PC-3 (cell line): ENCODE measurements at regions of chr9 and their contacts with region 1.

Region 1: DNA sequence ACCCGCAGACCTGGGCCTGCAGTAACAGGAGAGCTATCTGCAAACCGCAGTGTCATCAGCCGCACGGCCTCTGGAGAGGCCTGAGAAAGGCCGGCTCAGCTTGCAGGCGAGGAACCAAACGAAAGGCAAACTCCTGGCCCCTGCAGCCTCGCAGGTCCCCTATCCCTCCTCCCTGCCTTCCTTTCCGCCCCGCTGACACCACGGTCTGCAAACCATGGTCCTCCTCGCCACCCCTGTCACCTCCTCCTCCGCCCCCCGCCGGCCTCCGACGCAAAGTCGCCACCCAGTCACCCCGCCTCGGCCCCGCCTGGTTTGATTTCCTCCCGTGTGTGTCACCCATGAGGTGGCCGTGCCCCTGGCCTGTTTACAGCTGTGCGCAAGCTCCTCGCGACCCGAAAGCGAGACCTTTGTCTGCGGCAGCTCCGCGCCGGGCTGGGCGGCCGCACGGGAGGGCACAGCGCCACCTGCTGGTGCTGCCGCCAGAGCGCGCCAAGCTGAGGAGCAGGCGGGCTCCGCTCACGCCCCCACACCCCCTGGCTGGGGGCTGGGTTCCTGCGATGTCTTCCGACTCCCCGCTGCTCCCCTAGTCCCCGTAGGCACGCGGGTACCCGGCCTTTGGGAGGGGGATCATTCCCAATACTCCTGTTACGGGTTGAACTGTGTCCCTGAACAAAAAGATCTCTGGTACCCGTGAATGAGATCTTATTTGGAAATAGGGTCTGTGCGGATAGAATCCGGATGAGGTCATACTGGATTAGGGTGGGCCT is 19.4 kb downstream of the GBGT1 start:
- DNase-seq: peak; percentile 85
- ATAC-seq: peak; percentile 65
- H3K4me3 ChIP-seq: peak overlapping the region; percentile 58
- H3K27ac ChIP-seq: peak overlapping the region; percentile 49
- H3K4me1 ChIP-seq: peaks cover 18% of the 10 kb centered on the region
- H3K27me3 ChIP-seq: no peaks in the 10 kb centered on the region
- CTCF ChIP-seq: peak; percentile 89

Region 2: DNA sequence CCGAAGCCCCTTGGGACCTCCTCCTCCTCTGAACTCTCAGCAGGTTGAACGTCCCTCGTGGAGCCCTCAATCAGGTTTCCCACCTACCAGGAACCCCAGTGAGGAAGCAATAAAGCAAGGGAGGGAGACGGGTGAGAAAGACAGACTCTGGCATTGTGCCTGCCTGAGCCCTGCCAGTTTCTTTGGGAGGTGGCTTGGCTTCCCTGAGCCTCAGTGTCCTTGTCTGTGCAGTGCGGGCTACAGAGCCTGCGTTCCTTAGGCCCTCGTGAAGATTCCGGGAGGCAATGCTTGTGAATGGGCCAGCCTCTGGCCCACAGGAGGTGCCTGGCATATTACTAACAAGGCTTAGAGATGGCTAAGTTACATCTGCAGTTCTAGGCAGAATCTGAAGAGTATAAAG is 101.6 kb before region 1 on chr9:
- CTCF ChIA-PET with region 1: no interaction called
- POLR2A ChIA-PET with region 1: no interaction called
- intact Hi-C with region 1: loop called (anchors 2 kb)
- DNase-seq: no peak
- ATAC-seq: no peak
- H3K4me3 ChIP-seq: no peak overlapping the region
- H3K27ac ChIP-seq: no peak overlapping the region
- H3K4me1 ChIP-seq: no peaks in the 10 kb centered on the region
- H3K27me3 ChIP-seq: no peaks in the 10 kb centered on the region
- CTCF ChIP-seq: no peak

Region 3: GRCh38 chr9:133103183-133103986 is 40.9 kb before region 1 on chr9:
- CTCF ChIA-PET with region 1: interaction called, 17 read pairs
- POLR2A ChIA-PET with region 1: no interaction called
- intact Hi-C with region 1: loop called (anchors 1 kb)
- DNase-seq: peak; percentile 49
- ATAC-seq: peak; percentile 85
- H3K4me3 ChIP-seq: no peak overlapping the region
- H3K27ac ChIP-seq: no peak overlapping the region
- H3K4me1 ChIP-seq: peaks cover 9% of the 10 kb centered on the region; the same call in 1 of the 2 replicates
- H3K27me3 ChIP-seq: no peaks in the 10 kb centered on the region
- CTCF ChIP-seq: peak; percentile 90

Region 4: GRCh38 chr9:133133681-133134418 is 10.5 kb before region 1 on chr9:
- CTCF ChIA-PET with region 1: interaction called, 20 read pairs
- POLR2A ChIA-PET with region 1: interaction called, 3 read pairs
- intact Hi-C with region 1: loop called (anchors 1 kb)
- DNase-seq: peak; percentile 95
- ATAC-seq: peak; percentile 68
- H3K4me3 ChIP-seq: peak overlapping the region; percentile 39; the same call in 1 of the 2 replicates
- H3K27ac ChIP-seq: peak overlapping the region; percentile 95
- H3K4me1 ChIP-seq: peaks cover 31% of the 10 kb centered on the region
- H3K27me3 ChIP-seq: no peaks in the 10 kb centered on the region
- CTCF ChIP-seq: no peak

Region 5: DNA sequence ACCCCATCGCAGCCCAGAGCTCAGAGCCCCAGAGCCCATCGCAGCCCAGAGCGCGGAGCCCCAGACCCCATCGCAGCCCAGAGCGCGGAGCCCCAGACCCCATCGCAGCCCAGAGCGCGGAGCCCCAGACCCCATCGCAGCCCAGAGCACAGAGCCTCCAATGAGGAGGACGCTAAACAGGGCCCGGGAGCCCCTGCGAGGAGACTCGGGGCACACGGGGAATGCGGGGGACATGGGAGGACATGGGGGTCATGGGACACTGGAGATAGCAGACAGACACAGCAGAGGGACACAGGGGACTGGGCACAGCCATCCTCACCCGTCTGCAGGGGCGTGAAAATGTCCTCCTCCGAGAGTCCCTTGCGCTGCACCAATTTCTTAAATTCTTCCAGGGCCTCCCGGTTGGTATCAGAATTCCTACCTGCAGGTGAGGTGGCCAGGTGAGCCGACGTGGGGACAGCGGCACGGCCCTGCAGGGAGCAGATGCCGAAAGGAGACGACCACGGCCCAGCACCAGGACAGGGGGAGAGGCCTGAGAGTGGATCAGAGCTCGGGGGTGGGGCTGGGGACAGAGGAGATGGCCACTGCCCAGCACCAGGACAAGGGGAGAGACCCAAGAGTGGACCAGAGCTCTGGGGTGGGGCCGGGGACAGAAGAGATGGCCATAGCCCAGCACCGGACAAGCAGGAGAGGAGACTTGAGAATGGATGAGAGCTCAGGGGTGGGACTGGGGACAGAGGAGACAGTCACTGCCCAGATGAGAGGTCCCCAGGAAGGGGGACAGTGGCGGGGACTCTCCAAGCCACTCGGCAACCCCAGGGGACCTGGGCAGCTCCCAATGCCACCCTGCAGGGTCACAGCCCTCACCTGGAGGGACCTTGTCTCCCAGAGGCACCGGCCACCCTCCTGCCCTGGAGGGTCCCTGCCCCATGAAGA is 61.9 kb after region 1 on chr9:
- CTCF ChIA-PET with region 1: no interaction called
- POLR2A ChIA-PET with region 1: no interaction called
- intact Hi-C with region 1: no loop called
- DNase-seq: no peak
- ATAC-seq: no peak
- H3K4me3 ChIP-seq: no peak overlapping the region
- H3K27ac ChIP-seq: no peak overlapping the region
- H3K4me1 ChIP-seq: peaks cover 17% of the 10 kb centered on the region
- H3K27me3 ChIP-seq: no peaks in the 10 kb centered on the region
- CTCF ChIP-seq: no peak